PC-9 (cell line): ENCODE measurements at regions of chr17 and their contacts with region 1.

Region 1: DNA sequence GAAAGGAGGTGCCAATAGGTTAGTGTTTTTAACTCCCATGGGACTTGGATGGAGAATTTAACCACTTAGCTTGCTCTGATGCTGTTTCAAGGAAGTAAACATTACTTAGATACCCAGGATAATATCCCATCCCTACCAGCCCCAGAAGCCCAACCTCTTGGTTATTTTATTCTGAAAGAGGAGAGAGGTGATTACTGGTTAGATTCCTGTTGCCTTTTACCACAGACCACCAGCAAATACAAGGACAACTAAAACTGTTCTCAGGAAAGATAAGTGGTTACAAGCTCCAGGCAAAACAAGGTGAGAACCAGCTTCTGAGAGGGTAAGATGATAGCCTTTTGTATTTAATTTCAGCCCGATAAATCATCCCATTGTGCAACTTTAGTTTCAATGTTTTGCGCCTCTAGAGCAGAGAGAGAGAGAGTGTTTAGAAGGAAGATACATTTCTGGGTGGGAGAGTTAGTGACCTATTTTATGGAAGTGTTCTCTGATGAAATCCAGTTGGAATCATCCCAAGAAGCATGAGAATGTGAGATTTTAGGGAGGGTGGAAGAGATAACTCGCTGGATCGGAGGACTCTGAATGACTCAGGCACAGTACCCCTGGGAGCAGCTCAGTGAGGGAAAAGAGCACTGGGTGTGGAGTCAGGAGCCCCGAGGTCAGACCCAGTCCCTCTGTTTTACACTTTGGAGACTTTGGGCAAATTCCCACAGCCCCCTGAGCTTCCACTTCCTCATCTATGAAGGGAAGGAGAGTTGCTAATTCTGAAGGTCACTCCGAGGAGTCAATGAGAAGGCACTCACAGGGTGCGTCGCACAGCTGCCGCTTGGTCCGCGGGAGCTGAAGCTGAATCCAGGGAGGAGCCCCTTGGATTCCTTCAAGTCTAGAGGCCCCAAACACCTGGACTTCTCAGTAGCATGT is 12.1 kb downstream of the GLP2R start:
- DNase-seq: peak; percentile 41 to 88
- H3K4me3 ChIP-seq: peak overlapping the region; percentile 37; the same call in 1 of the 2 replicates
- H3K27ac ChIP-seq: peak overlapping the region; percentile 99
- H3K4me1 ChIP-seq: peaks cover 51% of the 10 kb centered on the region
- H3K27me3 ChIP-seq: no peaks in the 10 kb centered on the region
- CTCF ChIP-seq: no peak

Region 2: DNA sequence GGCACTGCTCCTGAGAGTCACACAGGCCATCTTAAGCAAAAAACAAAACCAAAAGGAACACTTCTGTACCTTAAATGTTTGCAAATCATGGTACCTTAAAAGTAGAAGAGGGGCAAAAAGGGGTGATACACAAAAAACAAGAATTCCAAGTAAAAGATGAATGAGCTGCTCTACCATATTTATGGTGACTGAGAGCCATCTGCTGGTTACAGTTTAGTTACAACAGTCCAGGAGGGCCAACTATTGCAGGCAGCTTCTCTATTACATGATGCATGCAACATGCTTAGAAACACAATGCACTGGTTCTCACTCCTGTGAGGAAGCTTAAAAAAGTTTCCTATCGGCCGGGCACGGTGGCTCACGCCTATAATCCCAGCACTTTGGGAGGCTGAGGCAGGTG is 315.7 kb before region 1 on chr17:
- CTCF ChIA-PET with region 1: no interaction called
- POLR2A ChIA-PET with region 1: no interaction called
- intact Hi-C with region 1: no loop called
- DNase-seq: peak in 1 of 2 experiments; percentile 17
- H3K4me3 ChIP-seq: no peak overlapping the region
- H3K27ac ChIP-seq: no peak overlapping the region
- H3K4me1 ChIP-seq: no peaks in the 10 kb centered on the region
- H3K27me3 ChIP-seq: no peaks in the 10 kb centered on the region
- CTCF ChIP-seq: peak; percentile 58

Region 3: GRCh38 chr17:9676742-9677387 is 160.9 kb before region 1 on chr17:
- CTCF ChIA-PET with region 1: no interaction called
- POLR2A ChIA-PET with region 1: no interaction called
- intact Hi-C with region 1: no loop called
- DNase-seq: peak; percentile 83 to 91
- H3K4me3 ChIP-seq: no peak overlapping the region
- H3K27ac ChIP-seq: peak overlapping the region; percentile 83
- H3K4me1 ChIP-seq: peaks cover 25% of the 10 kb centered on the region
- H3K27me3 ChIP-seq: no peaks in the 10 kb centered on the region
- CTCF ChIP-seq: no peak

Region 4: DNA sequence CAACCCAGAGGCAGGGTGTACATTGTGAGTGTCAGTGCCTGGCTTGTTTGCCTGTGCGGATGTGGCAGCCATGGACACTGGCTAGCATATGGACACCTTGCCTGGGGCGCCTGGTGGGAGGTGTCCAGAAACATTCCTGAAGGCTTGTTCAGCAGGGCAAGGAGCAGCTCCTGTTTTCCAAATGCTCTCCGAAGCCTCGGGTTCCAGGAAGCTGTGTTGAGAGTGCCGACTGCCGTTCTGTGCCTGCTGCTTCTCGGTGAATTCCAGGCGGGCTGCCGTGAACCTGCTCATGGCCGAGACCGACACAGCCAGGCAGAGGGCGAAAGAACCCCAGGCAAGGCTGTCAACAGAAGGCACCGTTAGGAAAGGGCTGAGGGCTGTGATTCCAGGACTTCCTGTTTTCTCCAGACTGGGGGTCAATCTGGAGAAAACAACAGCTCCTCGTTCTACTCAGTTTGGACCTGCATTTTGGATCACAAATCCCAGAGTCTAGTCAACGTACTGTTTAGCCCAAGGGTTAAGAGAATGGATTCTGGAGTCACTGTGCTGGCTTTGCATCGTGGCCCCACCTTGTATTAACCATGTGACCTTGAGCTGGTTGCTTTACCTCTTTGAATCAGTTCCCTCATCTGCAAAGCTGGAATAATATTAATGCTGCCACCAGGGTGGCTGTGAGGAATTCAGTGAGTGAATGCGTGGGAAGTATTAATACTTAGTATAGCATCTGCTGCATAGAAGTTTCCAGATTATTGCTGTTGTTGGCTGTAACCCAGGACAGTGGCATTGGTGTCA is 35.3 kb before region 1 on chr17:
- CTCF ChIA-PET with region 1: interaction called, 3 read pairs
- POLR2A ChIA-PET with region 1: no interaction called
- intact Hi-C with region 1: loop called (anchors 1 kb)
- DNase-seq: peak; percentile 92 to 96
- H3K4me3 ChIP-seq: peak overlapping the region; percentile 46; the same call in 1 of the 2 replicates
- H3K27ac ChIP-seq: peak overlapping the region; percentile 97
- H3K4me1 ChIP-seq: peaks cover 24% of the 10 kb centered on the region
- H3K27me3 ChIP-seq: no peaks in the 10 kb centered on the region
- CTCF ChIP-seq: no peak

Region 5: GRCh38 chr17:9817086-9817485 is 20.7 kb before region 1 on chr17:
- CTCF ChIA-PET with region 1: no interaction called
- POLR2A ChIA-PET with region 1: interaction called, 3 read pairs
- intact Hi-C with region 1: loop called (anchors 2 kb)
- DNase-seq: peak in 1 of 2 experiments; percentile 83
- H3K4me3 ChIP-seq: no peak overlapping the region
- H3K27ac ChIP-seq: no peak overlapping the region
- H3K4me1 ChIP-seq: peaks cover 13% of the 10 kb centered on the region
- H3K27me3 ChIP-seq: no peaks in the 10 kb centered on the region
- CTCF ChIP-seq: no peak

Region 6: DNA sequence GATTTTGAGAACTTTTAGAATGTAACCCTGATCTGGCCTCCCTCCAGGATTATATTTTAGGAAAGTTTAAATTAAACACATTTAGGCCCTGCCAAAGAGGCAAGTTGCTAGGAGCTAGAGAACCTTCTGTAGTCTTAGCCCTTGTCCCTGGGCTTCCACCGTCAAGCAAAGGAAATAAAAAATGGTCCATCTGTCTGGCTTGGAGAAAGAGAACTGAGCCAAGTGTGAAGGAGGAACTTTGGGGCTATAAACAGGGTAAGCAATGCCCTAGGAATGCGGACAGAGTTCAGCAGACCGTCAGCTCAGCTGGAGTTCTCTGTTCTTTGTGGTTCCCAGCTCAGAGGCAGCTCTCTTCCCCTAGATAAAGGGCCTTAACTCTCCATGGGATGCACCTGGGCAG is 37.6 kb after region 1 on chr17:
- CTCF ChIA-PET with region 1: interaction called, 3 read pairs
- POLR2A ChIA-PET with region 1: no interaction called
- intact Hi-C with region 1: loop called (anchors 1 kb)
- DNase-seq: peak; percentile 66 to 87
- H3K4me3 ChIP-seq: no peak overlapping the region
- H3K27ac ChIP-seq: peak overlapping the region; percentile 90
- H3K4me1 ChIP-seq: peaks cover 48% of the 10 kb centered on the region
- H3K27me3 ChIP-seq: no peaks in the 10 kb centered on the region
- CTCF ChIP-seq: no peak

Region 7: GRCh38 chr17:9880582-9880999 is 42.8 kb after region 1 on chr17:
- CTCF ChIA-PET with region 1: interaction called, 3 read pairs
- POLR2A ChIA-PET with region 1: no interaction called
- intact Hi-C with region 1: loop called (anchors 1 kb)
- DNase-seq: peak; percentile 64 to 92
- H3K4me3 ChIP-seq: 0 out of 2 replicates have a peak overlapping the region, but pooled peaks have one; percentile 9
- H3K27ac ChIP-seq: peak overlapping the region; percentile 72
- H3K4me1 ChIP-seq: peaks cover 42% of the 10 kb centered on the region
- H3K27me3 ChIP-seq: no peaks in the 10 kb centered on the region
- CTCF ChIP-seq: no peak